ENCODE measurements at regions of chr5 and their contacts with region 1.

Region 1: DNA sequence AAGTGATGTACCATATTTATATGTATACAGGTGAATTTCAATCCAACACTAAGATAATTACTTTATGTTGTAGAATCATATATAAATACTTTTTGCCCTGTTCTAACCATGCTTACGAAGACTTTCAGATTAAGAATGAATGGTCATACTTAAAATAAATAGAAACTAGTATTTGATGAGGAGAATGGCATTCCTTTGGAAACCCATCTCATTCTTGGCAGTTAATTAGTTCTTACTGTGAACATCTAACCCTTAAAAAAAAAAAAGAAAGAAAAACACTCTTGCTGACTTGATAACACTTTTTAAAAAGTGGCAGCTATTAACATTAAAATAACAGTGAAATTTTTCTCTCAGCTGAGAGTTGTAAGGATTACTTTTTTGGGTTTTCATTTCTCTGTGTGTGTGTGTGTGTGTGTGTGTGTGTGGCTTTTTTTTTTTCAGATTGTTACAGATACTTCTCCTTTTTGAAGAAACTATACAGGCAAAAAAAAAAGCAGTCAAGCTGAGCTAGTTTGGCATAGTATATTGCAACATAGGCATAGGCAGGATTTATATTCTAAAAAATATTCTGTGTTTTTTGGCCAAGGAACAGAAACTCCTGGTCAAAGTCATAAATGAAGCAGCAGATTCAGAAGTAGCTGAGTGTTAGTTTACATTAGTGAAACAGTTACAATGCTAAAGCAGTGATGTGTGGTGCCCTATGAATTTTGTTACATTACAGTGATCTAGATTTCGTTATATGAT is 163.5 kb downstream of the CD180 start:
- DNase-seq: no peak
- H3K4me3 Mint-ChIP-seq: no peak overlapping the region
- H3K27ac Mint-ChIP-seq: no peak overlapping the region
- H3K4me1 Mint-ChIP-seq: peaks cover 73% of the 10 kb centered on the region
- H3K27me3 Mint-ChIP-seq: no peaks in the 10 kb centered on the region

Region 2: DNA sequence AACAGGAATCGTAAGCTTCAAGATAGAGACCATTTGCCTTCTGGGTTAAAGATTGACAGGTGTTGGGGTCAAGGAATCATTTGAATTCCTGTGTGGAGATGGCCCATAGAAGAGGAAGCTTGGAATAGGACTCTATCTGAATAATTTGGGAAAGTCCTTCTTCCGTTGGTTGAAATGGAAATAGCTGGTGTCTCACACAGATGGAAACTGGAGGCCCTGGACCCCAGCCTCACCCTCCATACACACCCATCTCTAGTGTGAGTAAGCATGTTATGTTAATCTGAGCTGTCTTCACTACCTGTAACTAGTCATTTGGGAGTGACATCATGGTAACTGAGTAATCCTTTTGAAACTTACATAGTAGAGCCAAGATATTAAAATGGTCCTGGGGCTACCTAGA is 20.9 kb before region 1 on chr5:
- CTCF ChIA-PET with region 1: interaction called, 4 read pairs
- intact Hi-C with region 1: loop called (anchors 1 kb)
- DNase-seq: peak; percentile 54
- H3K4me3 Mint-ChIP-seq: no peak overlapping the region
- H3K27ac Mint-ChIP-seq: peak overlapping the region; percentile 67
- H3K4me1 Mint-ChIP-seq: peaks cover 93% of the 10 kb centered on the region
- H3K27me3 Mint-ChIP-seq: no peaks in the 10 kb centered on the region

Region 3: GRCh38 chr5:67021521-67021920 is 11.6 kb before region 1 on chr5:
- CTCF ChIA-PET with region 1: interaction called, 3 read pairs
- intact Hi-C with region 1: loop called (anchors 1 kb)
- DNase-seq: no peak
- H3K4me3 Mint-ChIP-seq: no peak overlapping the region
- H3K27ac Mint-ChIP-seq: no peak overlapping the region
- H3K4me1 Mint-ChIP-seq: peaks cover 45% of the 10 kb centered on the region
- H3K27me3 Mint-ChIP-seq: no peaks in the 10 kb centered on the region

Region 4: GRCh38 chr5:67065237-67065636 is 32.1 kb after region 1 on chr5:
- CTCF ChIA-PET with region 1: no interaction called
- intact Hi-C with region 1: loop called (anchors 1 kb)
- DNase-seq: peak; percentile 47
- H3K4me3 Mint-ChIP-seq: no peak overlapping the region
- H3K27ac Mint-ChIP-seq: peak overlapping the region; percentile 72
- H3K4me1 Mint-ChIP-seq: peaks cover 25% of the 10 kb centered on the region
- H3K27me3 Mint-ChIP-seq: no peaks in the 10 kb centered on the region